PC-3 (cell line): ENCODE measurements at regions of chr2 and their contacts with region 1.

Region 1: DNA sequence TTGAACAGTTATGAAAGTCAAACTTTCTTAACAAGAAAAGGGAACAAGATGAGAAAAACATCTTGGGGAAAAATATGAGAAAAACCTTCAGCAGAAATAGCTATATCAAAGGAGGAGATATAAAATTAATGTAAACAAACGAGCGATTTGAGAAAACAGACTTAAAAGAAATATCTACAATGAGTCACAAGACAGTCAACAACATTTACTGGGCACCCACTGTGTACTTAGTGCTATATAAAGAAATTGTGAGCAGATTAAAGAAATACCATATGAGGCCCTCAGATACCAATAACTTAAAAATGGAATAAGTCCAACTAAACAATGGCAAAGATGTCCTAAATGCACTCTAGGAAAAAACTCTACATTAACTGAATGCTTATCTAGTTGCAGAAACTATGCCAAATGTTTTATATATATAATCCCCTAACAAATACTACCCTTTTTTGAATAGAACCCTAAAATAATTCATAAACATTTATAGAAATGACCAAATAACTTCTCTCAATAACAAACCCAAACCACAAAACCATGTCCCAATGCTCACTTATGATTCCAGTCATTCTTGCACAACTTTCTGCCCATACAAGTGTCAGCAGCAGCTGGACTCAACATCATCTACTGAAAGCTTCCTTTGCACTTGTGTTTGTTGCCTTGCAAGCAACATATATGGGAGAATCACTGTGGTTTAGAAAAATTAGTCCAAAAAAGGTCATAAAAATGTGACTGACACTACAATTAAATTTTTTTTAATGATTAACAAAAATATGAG is 83.5 kb downstream of the COBLL1 start:
- DNase-seq: peak; percentile 81
- ATAC-seq: peak; percentile 95
- H3K4me3 ChIP-seq: no peak overlapping the region
- H3K27ac ChIP-seq: peak overlapping the region; percentile 3; the same call in 1 of the 2 replicates
- H3K4me1 ChIP-seq: peaks cover 25% of the 10 kb centered on the region
- H3K27me3 ChIP-seq: no peaks in the 10 kb centered on the region
- CTCF ChIP-seq: no peak

Region 2: DNA sequence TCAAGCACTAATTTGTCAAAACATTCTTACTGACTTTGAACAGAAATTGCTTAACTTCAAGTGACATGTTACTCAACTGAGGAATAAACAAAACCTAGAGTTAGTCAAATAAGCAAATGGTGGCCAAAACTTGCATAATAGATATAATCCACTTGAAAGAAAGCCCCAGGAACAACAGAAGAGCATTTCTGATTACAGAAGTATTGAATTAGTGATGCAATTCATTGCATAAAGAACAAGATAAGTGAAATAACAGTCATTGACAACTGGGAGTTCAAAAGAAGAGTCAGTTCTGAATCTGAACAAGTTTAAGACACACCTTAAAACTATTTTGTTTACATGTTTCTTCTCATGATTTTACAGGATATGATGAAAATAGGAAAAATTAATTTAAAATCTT is 52.7 kb after region 1 on chr2:
- CTCF ChIA-PET with region 1: no interaction called
- POLR2A ChIA-PET with region 1: no interaction called
- intact Hi-C with region 1: loop called (anchors 5 kb)
- DNase-seq: no peak
- ATAC-seq: no peak
- H3K4me3 ChIP-seq: no peak overlapping the region
- H3K27ac ChIP-seq: no peak overlapping the region
- H3K4me1 ChIP-seq: no peaks in the 10 kb centered on the region
- H3K27me3 ChIP-seq: no peaks in the 10 kb centered on the region
- CTCF ChIP-seq: no peak

Region 3: DNA sequence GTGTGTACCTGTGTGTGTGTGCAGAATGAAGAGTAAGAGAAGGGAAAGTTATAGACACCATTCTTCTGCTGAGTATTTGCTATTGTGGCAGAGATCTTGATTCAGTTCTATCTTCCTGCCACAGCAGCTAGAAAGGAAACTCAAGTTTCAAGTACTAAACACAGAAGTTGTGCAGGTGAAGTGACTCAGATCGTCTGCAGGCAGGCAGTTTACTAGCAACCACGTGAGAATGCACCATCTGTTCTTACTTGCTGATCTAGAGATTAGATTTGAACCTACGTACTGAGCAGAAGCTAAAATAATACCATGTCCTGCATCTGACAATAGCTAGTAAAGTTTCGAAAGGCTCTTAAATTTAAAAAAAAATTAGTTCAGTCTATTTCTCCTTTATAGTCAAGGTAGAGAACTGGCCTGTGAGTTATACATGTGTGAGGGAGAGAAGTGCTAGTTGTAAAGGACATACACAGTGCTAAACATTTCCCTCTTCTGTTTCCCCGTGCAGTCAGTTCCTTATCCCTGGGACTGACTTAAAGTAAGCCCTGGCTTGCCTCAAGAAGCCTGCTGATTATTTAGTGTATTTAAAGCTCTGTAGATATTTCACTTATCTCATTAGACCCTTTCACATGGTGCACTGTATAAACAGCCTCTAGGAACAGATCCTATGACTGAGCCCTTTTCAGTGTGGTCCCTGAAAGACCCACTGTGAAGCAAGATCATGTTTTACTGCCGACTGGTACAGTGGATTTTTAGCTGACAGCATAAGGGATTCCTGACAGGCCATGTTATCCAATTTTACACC is 152.2 kb after region 1 on chr2:
- CTCF ChIA-PET with region 1: no interaction called
- POLR2A ChIA-PET with region 1: no interaction called
- intact Hi-C with region 1: loop called (anchors 5 kb)
- DNase-seq: peak; percentile 64
- ATAC-seq: peak; percentile 93
- H3K4me3 ChIP-seq: no peak overlapping the region
- H3K27ac ChIP-seq: no peak overlapping the region
- H3K4me1 ChIP-seq: peaks cover 9% of the 10 kb centered on the region; the same call in 1 of the 2 replicates
- H3K27me3 ChIP-seq: no peaks in the 10 kb centered on the region
- CTCF ChIP-seq: no peak